ENCODE measurements at regions of chr3 and their contacts with region 1.

Region 1: DNA sequence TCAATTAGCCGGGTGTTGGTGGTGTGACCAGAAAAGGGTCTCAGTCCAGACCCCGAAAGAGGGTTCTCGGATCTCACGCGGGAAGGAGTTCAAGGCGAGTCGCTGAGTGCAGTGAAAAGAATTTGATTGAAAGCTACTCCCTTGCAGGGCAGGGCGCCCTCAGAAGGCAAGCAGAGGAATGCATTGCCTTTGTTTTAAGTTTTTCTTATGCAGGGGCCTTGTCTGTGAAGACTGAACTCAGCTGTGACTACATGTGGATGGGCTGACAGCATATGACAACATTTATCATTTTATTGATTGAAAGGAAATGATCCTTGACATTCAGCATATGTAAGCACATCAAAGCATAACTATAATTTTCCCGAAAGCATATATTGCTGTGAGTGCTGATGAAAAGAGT is 11.8 kb downstream of the CPN2 start:
- DNase-seq: no peak
- ATAC-seq: no peak
- H3K4me3 ChIP-seq: no peak overlapping the region
- H3K27ac ChIP-seq: no peak overlapping the region
- H3K4me1 ChIP-seq: peaks cover 0 to 2% (median 0%) of the 10 kb centered on the region in 3 donors
- H3K27me3 ChIP-seq: no peaks in the 10 kb centered on the region
- CTCF ChIP-seq: no peak

Region 2: GRCh38 chr3:193917158-193917557 is 422.2 kb before region 1 on chr3:
- intact Hi-C with region 1: no loop called
- DNase-seq: no peak
- ATAC-seq: no peak
- H3K4me3 ChIP-seq: no peak overlapping the region
- H3K27ac ChIP-seq: no peak overlapping the region
- H3K4me1 ChIP-seq: peaks cover 0 to 6% (median 0%) of the 10 kb centered on the region in 3 donors
- H3K27me3 ChIP-seq: no peaks in the 10 kb centered on the region
- CTCF ChIP-seq: no peak

Region 3: DNA sequence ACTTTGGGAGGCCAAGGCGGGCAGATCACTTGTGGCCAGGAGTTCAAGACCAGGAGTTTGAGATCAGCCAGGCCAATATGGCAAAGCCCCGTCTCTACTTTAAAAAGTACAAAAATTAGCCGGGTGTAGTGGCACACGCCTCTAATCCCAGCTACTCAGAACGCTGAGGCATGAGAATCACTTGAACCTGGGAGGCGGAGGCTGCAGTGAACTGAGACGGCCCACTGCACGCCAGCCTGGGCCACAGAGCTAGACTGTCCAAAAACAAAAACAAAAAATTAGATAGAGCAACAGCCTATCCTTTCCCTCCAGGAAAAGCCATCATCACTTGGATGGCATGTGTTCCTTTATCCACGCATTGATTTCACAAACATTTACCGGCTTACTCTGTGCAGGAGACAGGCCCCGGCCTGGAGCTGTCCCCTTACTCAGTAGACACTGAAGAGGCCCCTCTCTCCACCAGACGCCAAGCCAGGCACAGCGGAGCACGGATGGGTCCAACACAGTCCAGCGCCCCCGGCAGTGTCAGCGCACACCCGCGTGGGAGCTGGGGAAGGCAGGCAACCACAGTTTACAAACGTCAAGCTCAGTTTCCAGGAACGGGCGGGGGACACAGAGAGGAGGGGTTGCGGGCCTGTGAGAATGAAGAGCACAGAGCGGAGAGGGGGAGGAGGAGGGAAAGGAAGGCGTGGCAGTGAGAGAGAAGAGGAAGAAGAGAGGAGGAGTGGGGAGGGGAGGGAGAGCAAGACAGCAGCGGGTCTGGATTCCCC is 56.6 kb after region 1 on chr3:
- intact Hi-C with region 1: loop called in 1 of 3 experiments (anchors 5 kb)
- DNase-seq: no peak
- ATAC-seq: peak in 2 of 4 donors; percentile 50 to 52
- H3K4me3 ChIP-seq: no peak overlapping the region
- H3K27ac ChIP-seq: no peak overlapping the region
- H3K4me1 ChIP-seq: peaks cover 0 to 8% (median 0%) of the 10 kb centered on the region in 3 donors
- H3K27me3 ChIP-seq: peaks cover 0 to 6% (median 0%) of the 10 kb centered on the region in 4 donors
- CTCF ChIP-seq: no peak